ENCODE measurements at regions of chr1 and their contacts with region 1.

Region 1: DNA sequence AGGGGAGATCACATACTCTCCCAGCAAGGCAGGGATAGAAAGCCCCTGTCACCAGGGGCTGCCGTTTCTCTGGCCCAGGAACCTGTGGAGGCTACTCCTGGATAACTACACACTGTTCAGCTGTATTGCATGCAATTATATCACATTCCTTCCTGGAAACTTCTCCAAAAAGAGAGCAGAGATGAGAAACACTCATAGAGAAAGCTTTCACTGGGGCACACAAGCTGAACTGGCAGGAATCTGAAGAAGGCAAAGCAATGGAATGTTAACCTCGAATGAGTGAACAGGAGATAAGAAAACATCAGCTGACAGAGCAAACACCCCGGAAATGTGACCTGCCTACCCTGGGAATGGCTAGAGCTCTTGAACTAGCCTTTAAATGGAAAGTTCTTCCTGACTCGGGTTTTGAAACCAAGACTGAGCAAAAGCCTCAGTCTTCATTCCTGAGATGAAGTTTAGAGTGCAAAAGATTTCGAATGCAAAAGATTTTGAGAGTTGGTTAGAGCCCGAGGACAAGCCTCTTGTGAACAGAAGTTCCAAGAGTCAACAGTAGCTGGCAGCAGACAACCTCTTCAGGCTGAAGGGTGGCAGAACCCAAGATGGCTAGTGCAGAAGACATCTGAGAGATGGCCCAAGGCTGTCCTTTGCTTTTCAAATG is 32.3 kb downstream of the CCN1 start:
- DNase-seq: peak; percentile 97
- H3K4me3 ChIP-seq: no peak overlapping the region
- CTCF ChIP-seq: peak; percentile 58

Region 2: DNA sequence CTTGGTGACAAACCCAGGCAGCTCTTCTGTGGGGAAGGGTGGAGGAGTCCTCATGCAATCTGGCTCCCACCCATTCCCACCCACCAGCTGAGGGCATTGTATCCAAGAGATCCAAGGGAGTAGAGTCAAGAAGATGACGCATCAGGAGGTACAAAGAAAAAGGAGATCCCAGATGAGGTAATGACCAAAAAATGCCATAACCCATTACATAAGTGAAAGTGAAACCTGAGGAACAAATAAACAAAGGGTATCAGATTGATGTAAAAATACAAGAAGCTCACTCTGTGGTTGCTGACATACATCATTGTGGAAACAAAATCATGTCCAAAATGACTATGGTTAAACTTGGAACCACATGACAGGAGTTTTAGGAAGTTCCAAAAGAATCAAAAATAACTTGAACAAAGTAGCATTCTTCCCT is 10.2 kb after region 1 on chr1:
- CTCF ChIA-PET with region 1: interaction called, 46 read pairs
- POLR2A ChIA-PET with region 1: interaction called, 48 read pairs
- DNase-seq: peak; percentile 73
- H3K4me3 ChIP-seq: no peak overlapping the region
- CTCF ChIP-seq: no peak

Region 3: DNA sequence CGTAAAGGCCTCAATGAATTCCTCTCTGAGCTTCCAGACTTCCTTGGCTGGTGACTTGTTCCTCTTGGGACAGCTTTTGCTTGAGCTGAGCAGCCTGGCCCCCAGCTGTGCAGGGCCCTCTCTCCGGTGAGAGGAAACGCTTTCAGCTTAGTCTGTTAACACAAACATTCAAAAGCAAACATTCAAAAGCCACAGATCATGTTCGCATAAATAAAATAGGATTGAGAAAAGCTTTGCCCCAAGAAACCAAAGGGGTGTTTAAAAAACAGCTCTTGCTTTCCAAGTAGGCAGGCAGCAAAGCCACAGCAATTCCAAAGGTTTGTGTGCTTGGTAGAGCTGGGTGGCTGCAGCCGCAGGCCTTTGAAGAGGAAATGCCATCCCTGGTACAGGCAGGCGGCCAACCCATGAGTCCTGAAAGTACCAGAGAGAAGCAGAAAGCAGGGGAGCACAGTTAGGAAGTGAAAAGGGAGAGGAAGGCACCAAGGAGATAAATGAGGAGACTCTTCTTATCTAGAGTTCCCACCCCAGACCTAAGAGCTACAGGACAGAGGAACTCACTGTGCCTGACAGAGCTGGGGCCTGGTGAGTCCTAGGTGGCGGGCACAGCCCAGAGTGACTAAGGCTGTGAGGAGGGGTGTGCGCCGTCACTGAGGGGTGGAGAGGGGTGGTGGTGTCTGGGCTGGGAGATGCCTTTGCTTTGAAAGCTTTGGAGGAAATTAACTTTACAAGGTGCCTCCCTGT is 16.1 kb after region 1 on chr1:
- CTCF ChIA-PET with region 1: interaction called, 46 read pairs
- POLR2A ChIA-PET with region 1: interaction called, 48 read pairs
- DNase-seq: peak; percentile 92
- H3K4me3 ChIP-seq: peak overlapping the region; percentile 46
- CTCF ChIP-seq: no peak

Region 4: GRCh38 chr1:85654066-85654782 is 41.4 kb after region 1 on chr1:
- CTCF ChIA-PET with region 1: no interaction called
- POLR2A ChIA-PET with region 1: no interaction called
- DNase-seq: no peak
- H3K4me3 ChIP-seq: no peak overlapping the region
- CTCF ChIP-seq: no peak